ENCODE measurements at regions of chr13 and their contacts with region 1.

Region 1: DNA sequence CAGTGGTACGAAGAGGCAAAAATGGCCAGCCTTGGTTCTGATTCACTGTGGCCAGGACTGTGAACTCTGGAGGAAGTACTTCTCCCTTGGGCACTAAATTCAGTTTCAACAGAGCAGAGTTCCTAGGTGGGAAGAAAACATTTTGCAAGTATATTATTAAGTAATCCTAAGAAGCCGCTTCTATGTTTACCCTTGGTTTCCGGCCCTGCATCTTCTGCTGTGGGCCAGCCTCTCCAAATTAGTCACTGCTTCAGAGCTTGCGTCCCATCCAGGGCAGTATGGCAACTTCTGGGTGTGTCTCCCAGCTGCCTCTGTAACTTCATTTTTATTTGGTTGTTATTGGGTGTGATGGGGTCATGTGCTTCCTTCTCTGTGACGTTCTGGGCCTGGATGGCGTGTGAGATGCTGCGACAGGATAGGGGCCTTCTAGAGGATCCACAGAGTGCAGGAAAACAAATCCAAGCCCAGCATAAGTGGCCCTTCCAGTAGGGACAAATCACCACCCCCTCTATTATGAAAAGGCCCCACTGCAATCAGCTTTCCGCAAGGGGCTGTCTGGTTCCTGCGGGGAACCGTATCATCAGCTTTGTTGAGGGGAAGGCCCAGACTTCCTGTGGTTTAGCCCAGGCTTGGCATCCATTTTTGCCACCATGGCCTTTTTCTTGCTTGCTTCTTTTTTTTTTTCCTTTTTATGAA is 55.1 kb upstream of the C1QTNF9 start:
- DNase-seq: peak; percentile 84
- H3K4me3 Mint-ChIP-seq: peak overlapping the region; percentile 85
- H3K27ac Mint-ChIP-seq: peak overlapping the region; percentile 96
- H3K4me1 Mint-ChIP-seq: peaks cover 81% of the 10 kb centered on the region
- H3K27me3 Mint-ChIP-seq: no peaks in the 10 kb centered on the region

Region 2: GRCh38 chr13:23966691-23967615 is 287.3 kb before region 1 on chr13:
- CTCF ChIA-PET with region 1: no interaction called
- POLR2A ChIA-PET with region 1: no interaction called
- DNase-seq: peak; percentile 30
- H3K4me3 Mint-ChIP-seq: peak overlapping the region; percentile 64
- H3K27ac Mint-ChIP-seq: peak overlapping the region; percentile 84
- H3K4me1 Mint-ChIP-seq: peaks cover 43% of the 10 kb centered on the region
- H3K27me3 Mint-ChIP-seq: no peaks in the 10 kb centered on the region

Region 3: GRCh38 chr13:24160454-24161009 is 93.8 kb before region 1 on chr13 and contains the start of gene SPATA13:
- CTCF ChIA-PET with region 1: no interaction called
- POLR2A ChIA-PET with region 1: interaction called, 12 read pairs
- DNase-seq: peak; percentile 94
- H3K4me3 Mint-ChIP-seq: peak within 1 kb of the TSS; percentile 84
- H3K27ac Mint-ChIP-seq: peak within 1 kb of the TSS; percentile 18
- H3K4me1 Mint-ChIP-seq: peaks cover 25% of the 10 kb centered on the region
- H3K27me3 Mint-ChIP-seq: peaks cover 10% of the 10 kb centered on the region
- total RNA-seq, gene SPATA13: 55.4 to 59.2 TPM

Region 4: DNA sequence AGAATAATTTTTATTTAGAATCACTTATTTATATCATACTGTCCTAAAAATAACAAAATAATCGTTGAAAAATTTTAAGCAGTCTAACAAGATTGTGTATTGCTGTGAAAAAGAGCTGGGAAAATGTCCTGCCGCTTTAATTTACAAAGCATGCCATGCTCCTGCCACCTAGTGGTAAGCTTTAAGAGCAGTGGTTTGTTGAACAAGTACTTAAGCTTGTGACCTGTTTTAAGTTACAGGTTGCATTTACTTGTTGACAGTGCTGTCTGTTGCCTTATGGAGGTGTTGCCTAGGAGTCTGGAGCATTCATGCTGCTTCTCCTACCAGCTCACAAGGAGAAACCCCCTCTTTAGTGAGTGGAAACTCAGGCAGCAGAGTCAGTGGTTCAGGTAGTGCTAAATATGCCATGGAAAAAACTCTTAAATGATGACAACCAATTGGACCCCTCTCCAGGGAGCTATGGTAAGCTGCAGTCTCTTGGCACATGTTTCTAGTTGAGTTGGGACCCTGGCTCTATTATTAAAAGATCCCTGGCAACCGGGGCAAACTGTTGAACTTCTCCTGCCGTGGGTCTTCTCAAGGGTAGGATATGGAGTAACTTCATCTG is 25.3 kb before region 1 on chr13:
- CTCF ChIA-PET with region 1: interaction called, 12 read pairs
- POLR2A ChIA-PET with region 1: interaction called, 7 read pairs
- DNase-seq: peak; percentile 49
- H3K4me3 Mint-ChIP-seq: no peak overlapping the region
- H3K27ac Mint-ChIP-seq: no peak overlapping the region
- H3K4me1 Mint-ChIP-seq: peaks cover 39% of the 10 kb centered on the region
- H3K27me3 Mint-ChIP-seq: no peaks in the 10 kb centered on the region

Region 5: DNA sequence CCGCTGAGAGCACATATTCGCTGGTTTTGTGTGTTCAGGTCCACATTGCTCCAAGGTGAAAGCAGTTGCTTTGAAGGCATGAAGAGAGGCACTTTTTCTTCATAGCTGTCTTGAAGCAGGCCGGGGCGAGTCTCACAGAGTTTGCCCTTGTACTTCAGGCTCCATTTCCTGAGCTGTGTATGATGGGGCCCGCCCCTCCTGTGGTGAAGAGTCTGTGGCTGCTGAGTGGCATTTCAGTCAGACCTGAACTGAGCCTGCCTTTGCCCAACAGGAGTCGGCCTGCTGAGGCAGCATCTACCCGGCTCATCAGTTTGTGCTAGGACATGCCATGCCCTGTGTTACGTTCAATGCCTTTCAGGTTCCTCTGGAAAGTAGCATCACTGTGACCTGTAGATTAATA is 10.7 kb after region 1 on chr13:
- CTCF ChIA-PET with region 1: interaction called, 42 read pairs
- POLR2A ChIA-PET with region 1: interaction called, 715 read pairs
- DNase-seq: peak; percentile 92
- H3K4me3 Mint-ChIP-seq: peak overlapping the region; percentile 63
- H3K27ac Mint-ChIP-seq: peak overlapping the region; percentile 94
- H3K4me1 Mint-ChIP-seq: peaks cover 92% of the 10 kb centered on the region
- H3K27me3 Mint-ChIP-seq: no peaks in the 10 kb centered on the region

Region 6: GRCh38 chr13:24270639-24271141 is 16.4 kb after region 1 on chr13:
- CTCF ChIA-PET with region 1: interaction called, 42 read pairs
- POLR2A ChIA-PET with region 1: interaction called, 715 read pairs
- DNase-seq: peak; percentile 73
- H3K4me3 Mint-ChIP-seq: peak overlapping the region; percentile 86
- H3K27ac Mint-ChIP-seq: peak overlapping the region; percentile 97
- H3K4me1 Mint-ChIP-seq: peaks cover 92% of the 10 kb centered on the region
- H3K27me3 Mint-ChIP-seq: peaks cover 2% of the 10 kb centered on the region

Region 7: DNA sequence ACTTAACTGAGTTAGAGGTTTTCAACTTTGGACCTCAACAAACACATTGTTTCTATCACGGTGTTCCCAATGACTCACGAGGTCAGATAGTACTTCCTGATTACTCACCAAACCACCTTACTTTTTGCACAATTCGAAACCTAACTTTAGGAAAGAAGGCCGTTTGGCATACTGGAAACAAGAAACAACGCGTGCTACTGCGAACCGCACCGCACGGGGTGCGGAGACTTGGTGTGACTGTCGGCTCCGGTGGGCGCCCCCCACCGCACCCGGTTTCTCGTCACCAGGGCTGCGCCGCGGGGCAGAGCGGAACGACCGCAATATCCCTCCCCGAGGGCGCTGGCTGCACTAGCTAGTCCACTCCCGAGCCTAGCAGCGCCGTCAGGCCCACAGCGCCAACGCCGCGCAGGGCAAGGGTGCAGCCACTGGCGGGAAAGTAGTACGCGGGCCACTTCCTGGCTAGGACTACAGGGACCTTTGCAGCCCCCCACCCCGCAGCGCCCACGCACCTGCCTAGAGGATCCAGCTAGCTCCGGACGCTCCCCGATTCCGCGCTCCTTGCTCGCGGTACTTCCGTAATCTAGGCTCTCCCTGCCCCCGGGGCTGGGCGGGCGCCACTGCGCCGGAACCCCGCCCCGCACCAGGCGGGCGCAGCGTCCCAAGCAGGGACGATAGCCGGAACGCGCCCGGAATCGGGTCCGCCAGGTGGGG is 258.1 kb after region 1 on chr13 and contains the start of gene PARP4:
- CTCF ChIA-PET with region 1: no interaction called
- POLR2A ChIA-PET with region 1: interaction called, 10 read pairs
- DNase-seq: peak; percentile 78
- H3K4me3 Mint-ChIP-seq: peak within 1 kb of the TSS; percentile 89
- H3K27ac Mint-ChIP-seq: peak within 1 kb of the TSS; percentile 84
- H3K4me1 Mint-ChIP-seq: peaks cover 32% of the 10 kb centered on the region
- H3K27me3 Mint-ChIP-seq: no peaks in the 10 kb centered on the region
- total RNA-seq, gene PARP4: 72.2 to 76.4 TPM

Measured in activated CD4-positive, alpha-beta memory T cell treated with anti-CD3 and anti-CD28 coated beads, Interleukin-2, amount 10 ng/mL, durations not matched to agents 7 days and 5 days (primary cell).